BJ (cell line): ENCODE measurements at regions of chr7 and their contacts with region 1.

Region 1: GRCh38 chr7:140673063-140673773 is 473 bp downstream of the ADCK2 start:
- DNase-seq: no peak
- H3K4me3 ChIP-seq: peak overlapping the region; percentile 65
- H3K27me3 ChIP-seq: no peaks in the 10 kb centered on the region
- CTCF ChIP-seq: no peak

Region 2: GRCh38 chr7:140661121-140661520 is 12.1 kb before region 1 on chr7:
- CTCF ChIA-PET with region 1: interaction called, 12 read pairs
- POLR2A ChIA-PET with region 1: no interaction called
- DNase-seq: no peak
- H3K4me3 ChIP-seq: no peak overlapping the region
- H3K27me3 ChIP-seq: no peaks in the 10 kb centered on the region; the same call in 1 of the 2 replicates
- CTCF ChIP-seq: peak; percentile 28; the same call in 1 of the 2 replicates

Region 3: GRCh38 chr7:140683657-140684056 is 10.4 kb after region 1 on chr7:
- CTCF ChIA-PET with region 1: interaction called, 21 read pairs
- POLR2A ChIA-PET with region 1: interaction called, 3 read pairs
- DNase-seq: no peak
- H3K4me3 ChIP-seq: no peak overlapping the region
- H3K27me3 ChIP-seq: no peaks in the 10 kb centered on the region
- CTCF ChIP-seq: no peak